ENCODE measurements at regions of chr3 and their contacts with region 1.

Region 1: GRCh38 chr3:64030741-64031140 is 7.4 kb upstream of the PSMD6 start:
- DNase-seq: peak; percentile 71 to 80 (median 76)
- ATAC-seq: peak; percentile 90
- H3K4me3 ChIP-seq: no peak overlapping the region
- H3K27ac ChIP-seq: no peak overlapping the region
- H3K4me1 ChIP-seq: peaks cover 6% of the 10 kb centered on the region
- H3K27me3 ChIP-seq: no peaks in the 10 kb centered on the region
- CTCF ChIP-seq: peak; percentile 65 to 95 (median 91)
- POLR2A ChIP-seq: no peak

Region 2: GRCh38 chr3:64399205-64399800 is 368.6 kb after region 1 on chr3:
- intact Hi-C with region 1: loop called (anchors 5 kb)
- DNase-seq: peak; percentile 28 to 56 (median 40)
- ATAC-seq: peak; percentile 75
- H3K4me3 ChIP-seq: no peak overlapping the region
- H3K27ac ChIP-seq: no peak overlapping the region
- H3K4me1 ChIP-seq: no peaks in the 10 kb centered on the region
- H3K27me3 ChIP-seq: no peaks in the 10 kb centered on the region
- CTCF ChIP-seq: peak; percentile 36 to 79 (median 68)
- POLR2A ChIP-seq: no peak

Region 3: DNA sequence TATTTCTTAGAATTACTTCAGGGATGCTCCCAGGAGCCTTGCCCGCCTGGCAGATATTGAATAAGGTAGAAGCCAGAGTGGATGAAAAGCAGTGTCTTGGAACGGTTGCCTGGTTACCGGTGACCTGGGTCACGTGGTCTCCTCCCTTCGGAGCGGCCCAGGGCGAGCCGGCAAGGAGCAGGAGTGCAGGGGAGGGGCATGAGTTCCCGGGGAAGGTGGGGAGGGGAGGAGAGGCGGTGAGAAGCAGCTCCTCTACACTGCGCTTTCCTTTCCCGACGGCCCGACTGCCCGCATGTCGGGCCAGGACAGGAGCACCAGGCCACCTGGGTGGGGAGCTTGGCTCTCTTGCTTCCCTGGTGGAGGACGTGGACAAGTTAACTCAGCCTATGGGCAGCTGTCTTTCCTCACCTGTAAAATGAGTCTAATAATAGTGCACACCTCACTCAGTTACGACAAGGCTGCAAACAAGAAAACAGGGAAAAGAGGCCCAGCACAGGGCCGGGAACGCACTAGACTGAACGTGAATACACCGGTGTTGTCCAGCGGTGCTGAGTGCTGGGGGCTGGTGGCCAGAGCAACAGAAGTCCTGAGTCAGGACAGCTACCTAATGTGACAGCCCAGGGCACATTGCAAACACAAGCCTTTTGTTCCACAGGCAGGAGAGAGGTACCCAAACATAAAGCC is 458.8 kb after region 1 on chr3:
- intact Hi-C with region 1: loop called (anchors 5 kb)
- DNase-seq: peak; percentile 43 to 72 (median 70)
- ATAC-seq: peak; percentile 64
- H3K4me3 ChIP-seq: no peak overlapping the region
- H3K27ac ChIP-seq: no peak overlapping the region
- H3K4me1 ChIP-seq: peaks cover 28% of the 10 kb centered on the region
- H3K27me3 ChIP-seq: no peaks in the 10 kb centered on the region
- CTCF ChIP-seq: no peak
- POLR2A ChIP-seq: no peak

Region 4: GRCh38 chr3:65425880-65426279 is 1395.1 kb after region 1 on chr3:
- intact Hi-C with region 1: no loop called
- DNase-seq: no peak
- ATAC-seq: no peak
- H3K4me3 ChIP-seq: no peak overlapping the region
- H3K27ac ChIP-seq: no peak overlapping the region
- H3K4me1 ChIP-seq: no peaks in the 10 kb centered on the region
- H3K27me3 ChIP-seq: no peaks in the 10 kb centered on the region
- CTCF ChIP-seq: peak in 3 of 7 experiments; percentile 22 to 27 (median 24)
- POLR2A ChIP-seq: no peak

Measured in body of pancreas (tissue), 4 donors.